ENCODE measurements at regions of chr13 and their contacts with region 1.

Region 1: GRCh38 chr13:27826379-27827353 is 34.4 kb downstream of the GSX1 start:
- DNase-seq: peak; percentile 82
- H3K4me3 ChIP-seq: peak overlapping the region; percentile 29 to 58
- H3K27ac ChIP-seq: no peak overlapping the region
- H3K4me1 ChIP-seq: peaks cover 0 to 2% of the 10 kb centered on the region in 2 experiments; a peak in 1 of 4 replicates
- H3K27me3 ChIP-seq: peaks cover 46% of the 10 kb centered on the region
- CTCF ChIP-seq: peak; percentile 92
- EP300 ChIP-seq: no peak
- RAD21 ChIP-seq: peak; percentile 90

Region 2: GRCh38 chr13:26910754-26911465 is 915.8 kb before region 1 on chr13:
- CTCF ChIA-PET with region 1: no interaction called
- POLR2A ChIA-PET with region 1: no interaction called
- DNase-seq: no peak
- H3K4me3 ChIP-seq: no peak overlapping the region
- H3K27ac ChIP-seq: no peak overlapping the region
- H3K4me1 ChIP-seq: no peaks in the 10 kb centered on the region; a peak in 1 of 4 replicates
- H3K27me3 ChIP-seq: no peaks in the 10 kb centered on the region; the same call in 1 of the 2 replicates
- CTCF ChIP-seq: no peak
- EP300 ChIP-seq: no peak
- RAD21 ChIP-seq: no peak

Region 3: DNA sequence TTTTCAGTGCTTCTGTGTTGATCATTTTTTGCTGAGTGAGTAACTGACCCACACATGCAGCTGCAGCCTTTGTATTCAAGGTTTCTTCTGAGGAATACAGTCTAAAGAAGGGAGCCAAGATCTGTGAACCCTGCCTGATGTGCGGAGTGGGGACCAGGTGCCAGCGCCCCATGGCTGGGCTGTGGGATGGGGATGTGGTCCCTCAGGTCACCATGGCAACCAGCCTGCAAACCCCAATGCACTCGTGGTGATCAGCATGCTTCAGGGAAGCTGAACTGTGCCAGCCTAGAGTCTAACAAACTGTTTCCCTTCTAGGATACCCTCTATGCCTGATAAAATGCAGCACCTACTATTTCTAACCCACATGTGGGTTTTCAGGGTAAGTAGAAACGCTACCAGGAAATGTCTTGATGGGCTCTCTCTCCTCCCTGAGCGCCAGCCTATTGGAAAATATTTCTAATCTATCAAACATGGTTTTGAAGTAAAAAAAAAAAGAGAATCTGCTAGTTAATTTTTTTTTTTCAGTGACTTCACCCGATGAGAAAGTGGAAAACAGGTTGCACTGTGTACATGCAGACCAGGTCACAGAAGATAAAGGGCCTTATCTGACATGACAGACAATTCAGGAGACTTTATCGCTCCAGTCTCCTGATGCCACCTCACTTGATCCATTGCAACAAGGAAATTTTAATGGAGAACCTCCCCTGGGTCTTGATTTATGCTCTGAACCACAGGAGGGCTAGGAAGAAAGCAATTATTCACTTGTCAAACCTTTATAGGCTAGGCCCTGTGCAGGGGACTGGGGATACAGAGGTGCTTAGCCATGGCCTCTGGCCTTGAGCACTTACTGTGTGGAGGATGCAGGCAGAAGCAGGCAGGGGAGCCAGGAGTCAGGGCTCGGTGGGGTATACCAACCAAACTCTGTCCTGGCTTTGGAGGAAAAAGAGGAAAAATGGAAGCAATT is 504.9 kb before region 1 on chr13:
- CTCF ChIA-PET with region 1: no interaction called
- POLR2A ChIA-PET with region 1: no interaction called
- DNase-seq: no peak
- H3K4me3 ChIP-seq: no peak overlapping the region
- H3K27ac ChIP-seq: no peak overlapping the region
- H3K4me1 ChIP-seq: no peaks in the 10 kb centered on the region
- H3K27me3 ChIP-seq: peaks cover 61% of the 10 kb centered on the region
- CTCF ChIP-seq: no peak
- EP300 ChIP-seq: no peak
- RAD21 ChIP-seq: no peak

Region 4: GRCh38 chr13:27362064-27362883 is 464.4 kb before region 1 on chr13:
- CTCF ChIA-PET with region 1: interaction called, 170 read pairs
- POLR2A ChIA-PET with region 1: interaction called, 4 read pairs
- DNase-seq: peak; percentile 89
- H3K4me3 ChIP-seq: peak overlapping the region; percentile 45 to 66
- H3K27ac ChIP-seq: no peak overlapping the region
- H3K4me1 ChIP-seq: peaks cover 0 to 5% of the 10 kb centered on the region in 2 experiments; a peak in 1 of 4 replicates
- H3K27me3 ChIP-seq: peaks cover 27% of the 10 kb centered on the region
- CTCF ChIP-seq: peak; percentile 92
- EP300 ChIP-seq: no peak
- RAD21 ChIP-seq: peak; percentile 90

Region 5: DNA sequence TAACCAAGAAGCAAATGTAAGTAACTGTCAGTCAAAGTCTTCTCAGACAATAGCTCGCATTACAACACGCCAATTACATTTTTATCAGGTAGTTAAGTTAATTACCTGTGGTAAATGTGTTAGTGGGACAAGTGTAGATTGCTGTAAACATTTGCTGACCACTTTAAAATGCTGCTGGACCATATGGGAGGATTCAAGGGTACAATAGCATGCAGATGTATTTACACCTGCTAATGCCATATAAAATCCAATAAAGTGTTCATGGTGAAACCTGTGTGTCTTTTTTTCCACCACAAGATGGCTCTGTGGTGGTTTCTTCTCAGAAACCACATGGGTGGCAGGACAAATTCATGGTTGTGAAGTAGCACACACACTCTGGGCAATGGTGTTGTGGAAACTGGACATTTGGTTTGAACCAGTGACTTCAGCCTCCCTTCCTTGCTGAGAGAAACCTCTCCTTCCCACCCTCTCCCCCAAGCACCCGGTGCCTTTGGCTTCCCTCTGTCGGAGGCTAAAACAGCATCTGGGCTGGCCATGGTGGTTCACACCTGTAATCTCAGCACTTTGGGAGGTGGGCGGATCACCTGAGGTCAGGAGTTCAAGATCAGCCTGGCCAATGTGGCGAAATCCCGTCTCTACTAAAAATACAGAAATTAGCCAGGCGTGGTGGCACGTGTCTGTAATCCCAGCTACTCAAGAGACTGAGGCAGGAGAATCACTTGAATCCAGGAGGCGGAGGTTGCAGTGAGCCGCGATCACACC is 420.3 kb before region 1 on chr13:
- CTCF ChIA-PET with region 1: interaction called, 17 read pairs
- POLR2A ChIA-PET with region 1: no interaction called
- DNase-seq: peak; percentile 53
- H3K4me3 ChIP-seq: no peak overlapping the region
- H3K27ac ChIP-seq: no peak overlapping the region
- H3K4me1 ChIP-seq: no peaks in the 10 kb centered on the region; a peak in 1 of 4 replicates
- H3K27me3 ChIP-seq: peaks cover 34% of the 10 kb centered on the region; the same call in 1 of the 2 replicates
- CTCF ChIP-seq: peak; percentile 65
- EP300 ChIP-seq: no peak
- RAD21 ChIP-seq: peak; percentile 66

Region 6: DNA sequence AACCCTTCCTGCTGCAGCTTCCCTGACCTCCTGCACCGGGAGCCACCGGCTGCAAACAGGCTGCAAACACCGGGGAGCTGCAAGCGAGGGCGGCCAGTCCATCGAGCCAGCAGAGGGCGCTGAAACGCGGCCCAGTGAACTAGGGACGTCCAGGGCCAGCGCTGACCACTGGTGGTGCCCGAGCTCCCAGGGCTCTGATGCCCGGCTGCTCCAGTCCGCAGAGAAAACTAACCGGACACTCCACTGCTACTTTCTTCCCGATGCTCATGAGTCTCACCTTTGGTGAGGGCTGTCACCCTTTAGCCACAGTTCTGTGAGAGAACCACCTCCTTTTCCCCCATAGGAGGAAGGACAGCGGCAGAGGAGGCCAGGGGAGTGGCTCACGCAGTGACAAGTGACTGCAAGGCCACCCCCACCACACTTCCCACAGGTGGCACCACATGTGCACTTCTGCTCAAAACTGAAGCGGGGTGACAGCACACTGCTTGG is 293.5 kb before region 1 on chr13:
- CTCF ChIA-PET with region 1: interaction called, 207 read pairs
- POLR2A ChIA-PET with region 1: no interaction called
- DNase-seq: peak; percentile 85
- H3K4me3 ChIP-seq: peak overlapping the region; percentile 42 to 46
- H3K27ac ChIP-seq: no peak overlapping the region
- H3K4me1 ChIP-seq: peaks cover 0 to 3% of the 10 kb centered on the region in 2 experiments; a peak in 1 of 4 replicates
- H3K27me3 ChIP-seq: peaks cover 7% of the 10 kb centered on the region; the same call in 1 of the 2 replicates
- CTCF ChIP-seq: peak; percentile 93
- EP300 ChIP-seq: no peak
- RAD21 ChIP-seq: peak; percentile 82

Region 7: DNA sequence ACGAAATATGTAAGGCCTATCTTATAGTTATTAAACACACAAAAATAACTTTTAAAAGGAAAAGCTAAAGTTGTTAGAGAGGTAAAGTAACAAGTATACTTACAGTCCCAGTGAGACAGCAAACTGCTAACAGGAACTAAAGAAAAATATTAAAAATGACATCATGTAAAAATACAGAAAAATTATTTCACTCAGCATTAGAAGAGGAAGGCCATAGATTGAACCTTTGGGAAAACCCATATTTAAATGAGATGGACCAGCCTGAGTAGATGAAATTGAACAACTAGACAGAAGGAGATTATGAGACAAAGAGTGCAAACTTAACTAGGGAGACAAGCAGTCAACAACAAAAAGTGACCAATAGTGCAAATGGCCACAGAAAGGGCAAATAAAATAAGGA is 255.8 kb before region 1 on chr13:
- CTCF ChIA-PET with region 1: no interaction called
- POLR2A ChIA-PET with region 1: no interaction called
- DNase-seq: no peak
- H3K4me3 ChIP-seq: no peak overlapping the region
- H3K27ac ChIP-seq: no peak overlapping the region
- H3K4me1 ChIP-seq: peaks cover 0 to 4% of the 10 kb centered on the region in 2 experiments; a peak in 2 of 4 replicates
- H3K27me3 ChIP-seq: no peaks in the 10 kb centered on the region
- CTCF ChIP-seq: no peak
- EP300 ChIP-seq: no peak
- RAD21 ChIP-seq: no peak

Region 8: GRCh38 chr13:27808851-27809550 is 17.7 kb before region 1 on chr13:
- CTCF ChIA-PET with region 1: interaction called, 48 read pairs
- POLR2A ChIA-PET with region 1: no interaction called
- DNase-seq: no peak
- H3K4me3 ChIP-seq: no peak overlapping the region
- H3K27ac ChIP-seq: no peak overlapping the region
- H3K4me1 ChIP-seq: no peaks in the 10 kb centered on the region
- H3K27me3 ChIP-seq: peaks cover 64% of the 10 kb centered on the region
- CTCF ChIP-seq: no peak
- EP300 ChIP-seq: no peak
- RAD21 ChIP-seq: no peak

Region 9: GRCh38 chr13:27953676-27954405 is 127.2 kb after region 1 on chr13:
- CTCF ChIA-PET with region 1: interaction called, 35 read pairs
- POLR2A ChIA-PET with region 1: no interaction called
- DNase-seq: peak; percentile 90
- H3K4me3 ChIP-seq: peak overlapping the region; percentile 24 to 45; a peak in 2 of 4 replicates
- H3K27ac ChIP-seq: no peak overlapping the region
- H3K4me1 ChIP-seq: no peaks in the 10 kb centered on the region
- H3K27me3 ChIP-seq: peaks cover 41% of the 10 kb centered on the region
- CTCF ChIP-seq: peak; percentile 72
- EP300 ChIP-seq: no peak
- RAD21 ChIP-seq: peak; percentile 64

Region 10: GRCh38 chr13:28166279-28166678 is 339.6 kb after region 1 on chr13:
- CTCF ChIA-PET with region 1: no interaction called
- POLR2A ChIA-PET with region 1: no interaction called
- DNase-seq: no peak
- H3K4me3 ChIP-seq: no peak overlapping the region
- H3K27ac ChIP-seq: no peak overlapping the region
- H3K4me1 ChIP-seq: peaks cover 0 to 7% of the 10 kb centered on the region in 2 experiments; a peak in 1 of 4 replicates
- H3K27me3 ChIP-seq: no peaks in the 10 kb centered on the region
- CTCF ChIP-seq: no peak
- EP300 ChIP-seq: no peak
- RAD21 ChIP-seq: no peak